Thyroid gland (tissue), 4 donors: ENCODE measurements at regions of chr2 and their contacts with region 1.

Region 1: GRCh38 chr2:130332271-130333073 is 10.2 kb upstream of the IMP4 start:
- DNase-seq: peak; percentile 77 to 83
- H3K4me3 ChIP-seq: no peak overlapping the region
- H3K27ac ChIP-seq: no peak overlapping the region
- H3K4me1 ChIP-seq: no peaks in the 10 kb centered on the region
- H3K27me3 ChIP-seq: no peaks in the 10 kb centered on the region
- CTCF ChIP-seq: peak; percentile 76 to 96 (median 89)
- POLR2A ChIP-seq: no peak

Region 2: GRCh38 chr2:129936334-129936934 is 396.0 kb before region 1 on chr2:
- intact Hi-C with region 1: loop called (anchors 5 kb)
- DNase-seq: peak in 1 of 2 donors; percentile 74
- H3K4me3 ChIP-seq: no peak overlapping the region
- H3K27ac ChIP-seq: no peak overlapping the region
- H3K4me1 ChIP-seq: peaks cover 12 to 19% of the 10 kb centered on the region in 2 donors
- H3K27me3 ChIP-seq: no peaks in the 10 kb centered on the region
- CTCF ChIP-seq: peak in 2 of 6 experiments; percentile 32 to 48
- POLR2A ChIP-seq: no peak

Region 3: GRCh38 chr2:130154773-130155765 is 177.4 kb before region 1 on chr2:
- intact Hi-C with region 1: loop called (anchors 5 kb)
- DNase-seq: no peak
- H3K4me3 ChIP-seq: no peak overlapping the region
- H3K27ac ChIP-seq: peak overlapping the region; percentile 23 to 63 (median 41)
- H3K4me1 ChIP-seq: peaks cover 32 to 40% of the 10 kb centered on the region in 2 donors
- H3K27me3 ChIP-seq: no peaks in the 10 kb centered on the region
- CTCF ChIP-seq: no peak
- POLR2A ChIP-seq: no peak

Region 4: GRCh38 chr2:130198343-130198742 is 134.1 kb before region 1 on chr2 and contains the start of gene TUBA3E:
- intact Hi-C with region 1: no loop called
- DNase-seq: no peak
- H3K4me3 ChIP-seq: no peak within 1 kb of the TSS
- H3K27ac ChIP-seq: no peak within 1 kb of the TSS
- H3K4me1 ChIP-seq: no peaks in the 10 kb centered on the region
- H3K27me3 ChIP-seq: no peaks in the 10 kb centered on the region
- CTCF ChIP-seq: no peak
- POLR2A ChIP-seq: no peak
- total RNA-seq, gene TUBA3E: 0.27 TPM in 1 of 4 donors, not detected in the others